Activated CD8-positive, alpha-beta T cell treated with anti-CD3 and anti-CD28 coated beads, Interleukin-2, amount 10 ng/mL, durations not matched to agents 7 days and 5 days (primary cell): ENCODE measurements at regions of chr10 and their contacts with region 1.

Region 1: DNA sequence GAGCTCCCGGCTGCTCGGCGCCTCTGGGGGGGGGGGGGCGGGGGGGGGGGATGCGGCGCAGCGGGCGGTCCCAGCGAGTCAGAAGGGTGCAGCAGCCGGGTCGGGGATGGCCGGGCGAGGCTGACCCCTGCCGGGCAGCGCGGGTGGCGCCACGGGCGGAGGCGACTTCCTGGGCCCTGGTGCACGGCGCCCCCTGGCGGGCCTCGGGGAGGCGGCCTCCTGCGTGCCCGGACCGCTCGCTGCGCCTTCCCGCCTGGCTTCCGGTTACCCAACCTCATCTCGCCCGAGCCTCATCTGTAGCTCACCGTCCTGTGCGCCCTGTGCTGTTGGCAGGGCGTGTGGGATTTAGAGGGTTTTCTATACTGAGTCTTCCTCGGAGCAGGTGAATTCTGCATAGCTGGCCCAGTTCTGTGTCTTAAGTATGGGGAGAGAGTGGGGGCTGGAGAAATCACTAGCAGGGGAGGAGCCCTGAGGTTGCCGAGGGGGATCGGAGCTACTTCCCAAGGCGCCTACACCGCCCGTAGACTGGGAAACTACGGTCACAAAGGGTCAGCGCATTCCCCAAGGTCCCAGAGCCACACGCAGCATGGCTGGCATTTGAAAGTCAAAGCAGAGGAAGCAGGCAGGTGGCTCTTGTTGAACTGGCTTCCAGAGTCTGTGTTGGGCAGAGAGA is 28.3 kb upstream of the WDFY4 start:
- DNase-seq: peak; percentile 91
- ATAC-seq: peak; percentile 98
- H3K4me3 Mint-ChIP-seq: peak overlapping the region; percentile 70
- H3K27ac Mint-ChIP-seq: peak overlapping the region; percentile 42
- H3K4me1 Mint-ChIP-seq: peaks cover 14% of the 10 kb centered on the region
- H3K27me3 Mint-ChIP-seq: peaks cover 39% of the 10 kb centered on the region

Region 2: DNA sequence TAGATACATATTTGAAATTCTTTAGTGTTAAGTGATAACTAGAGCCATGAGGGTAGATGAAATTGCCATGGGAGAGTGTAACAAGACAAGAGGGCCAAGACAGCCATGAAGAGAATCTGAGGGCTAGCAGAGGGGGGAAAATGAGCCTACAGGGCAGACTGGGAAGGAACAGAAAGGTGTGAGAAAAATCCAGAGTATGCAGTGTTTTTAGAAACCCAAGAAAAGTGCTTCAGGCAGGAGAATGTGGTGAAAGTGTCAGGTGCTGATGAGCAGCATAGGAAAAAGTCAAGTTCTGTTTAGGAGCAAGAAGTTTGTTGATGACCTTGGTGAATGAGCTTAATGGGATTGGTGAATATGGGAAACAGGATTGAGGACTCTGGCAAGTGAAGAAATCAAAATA is 286.8 kb before region 1 on chr10:
- CTCF ChIA-PET with region 1: interaction called, 87 read pairs
- POLR2A ChIA-PET with region 1: no interaction called
- DNase-seq: no peak
- ATAC-seq: no peak
- H3K4me3 Mint-ChIP-seq: no peak overlapping the region
- H3K27ac Mint-ChIP-seq: no peak overlapping the region
- H3K4me1 Mint-ChIP-seq: no peaks in the 10 kb centered on the region
- H3K27me3 Mint-ChIP-seq: no peaks in the 10 kb centered on the region

Region 3: DNA sequence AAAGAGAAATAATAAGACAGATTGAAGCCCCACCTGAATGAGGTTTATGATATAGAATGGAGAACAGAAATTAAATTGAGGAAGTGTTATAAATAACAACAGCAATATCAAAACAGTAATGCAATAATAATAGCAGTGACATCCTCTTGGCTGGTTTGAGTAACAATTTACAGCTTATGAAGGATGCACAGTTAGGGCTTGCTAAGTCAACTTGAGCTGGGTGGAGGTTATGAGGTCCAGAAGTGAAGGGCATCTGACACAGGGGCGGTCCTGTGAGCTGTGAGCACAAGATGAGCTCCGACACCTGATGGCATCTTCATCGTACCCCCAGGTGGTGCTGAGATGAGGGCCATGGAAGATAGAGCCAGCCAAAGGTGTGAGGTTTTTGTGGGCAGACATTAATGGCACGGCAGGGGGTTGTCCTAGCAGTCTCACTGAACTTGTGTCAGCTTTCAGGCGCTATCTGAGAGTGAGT is 82.0 kb before region 1 on chr10:
- CTCF ChIA-PET with region 1: interaction called, 10 read pairs
- POLR2A ChIA-PET with region 1: no interaction called
- DNase-seq: no peak
- ATAC-seq: no peak
- H3K4me3 Mint-ChIP-seq: no peak overlapping the region
- H3K27ac Mint-ChIP-seq: no peak overlapping the region
- H3K4me1 Mint-ChIP-seq: no peaks in the 10 kb centered on the region
- H3K27me3 Mint-ChIP-seq: peaks cover 20% of the 10 kb centered on the region

Region 4: DNA sequence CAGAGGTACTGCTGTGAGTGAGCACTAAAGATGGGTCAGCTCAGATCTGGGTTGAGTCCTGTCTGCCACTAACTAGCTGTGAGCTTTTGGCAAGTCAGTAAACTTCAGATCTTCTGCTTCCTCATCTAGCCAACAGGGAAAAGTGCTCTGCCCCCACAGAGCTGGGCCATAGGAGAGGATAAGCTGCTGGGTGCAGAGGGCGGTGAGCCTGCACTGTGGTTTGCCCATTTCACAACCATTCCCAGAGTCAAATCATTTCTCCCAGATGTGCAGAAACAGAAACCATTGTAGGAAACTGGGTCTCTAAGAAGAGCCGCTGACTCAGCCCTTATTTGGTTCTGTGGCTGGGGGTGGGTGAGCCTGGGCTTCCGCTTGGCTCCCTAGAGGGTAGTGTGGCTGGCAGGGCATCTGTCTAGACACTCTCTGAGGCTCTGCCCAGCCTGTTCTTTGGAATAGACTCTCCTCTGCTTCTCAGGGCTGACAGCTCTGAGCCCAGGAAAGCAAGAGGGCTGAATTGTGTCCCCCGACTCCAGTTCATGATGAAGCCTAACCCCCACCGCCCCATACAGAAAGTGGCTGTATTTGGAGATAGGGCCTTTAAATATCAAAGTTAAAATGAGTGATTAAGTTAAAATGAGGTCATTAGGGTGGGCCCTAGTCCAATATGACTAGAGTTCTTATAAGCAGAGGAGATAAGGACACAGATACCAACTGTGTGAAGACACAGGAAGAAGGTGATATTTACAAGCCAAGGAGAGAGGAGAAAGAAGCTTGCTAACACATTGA is 22.0 kb before region 1 on chr10:
- CTCF ChIA-PET with region 1: interaction called, 30 read pairs
- POLR2A ChIA-PET with region 1: no interaction called
- DNase-seq: peak; percentile 42
- ATAC-seq: peak; percentile 86
- H3K4me3 Mint-ChIP-seq: peak overlapping the region; percentile 28
- H3K27ac Mint-ChIP-seq: peak overlapping the region; percentile 47
- H3K4me1 Mint-ChIP-seq: peaks cover 19% of the 10 kb centered on the region
- H3K27me3 Mint-ChIP-seq: peaks cover 35% of the 10 kb centered on the region

Region 5: GRCh38 chr10:49164559-49165188 is 508.3 kb after region 1 on chr10:
- CTCF ChIA-PET with region 1: interaction called, 11 read pairs
- POLR2A ChIA-PET with region 1: no interaction called
- DNase-seq: peak; percentile 70
- ATAC-seq: peak; percentile 90
- H3K4me3 Mint-ChIP-seq: no peak overlapping the region
- H3K27ac Mint-ChIP-seq: peak overlapping the region; percentile 5
- H3K4me1 Mint-ChIP-seq: peaks cover 16% of the 10 kb centered on the region
- H3K27me3 Mint-ChIP-seq: peaks cover 7% of the 10 kb centered on the region